Calu3 (cell line): ENCODE measurements at regions of chr20 and their contacts with region 1.

Region 1: GRCh38 chr20:58236612-58237330 is 8.3 kb upstream of the ANKRD60 start:
- DNase-seq: peak; percentile 90
- H3K4me3 Mint-ChIP-seq: peak overlapping the region; percentile 73
- H3K27ac Mint-ChIP-seq: no peak overlapping the region
- H3K4me1 Mint-ChIP-seq: no peaks in the 10 kb centered on the region
- H3K27me3 Mint-ChIP-seq: no peaks in the 10 kb centered on the region
- CTCF ChIP-seq: peak; percentile 96

Region 2: DNA sequence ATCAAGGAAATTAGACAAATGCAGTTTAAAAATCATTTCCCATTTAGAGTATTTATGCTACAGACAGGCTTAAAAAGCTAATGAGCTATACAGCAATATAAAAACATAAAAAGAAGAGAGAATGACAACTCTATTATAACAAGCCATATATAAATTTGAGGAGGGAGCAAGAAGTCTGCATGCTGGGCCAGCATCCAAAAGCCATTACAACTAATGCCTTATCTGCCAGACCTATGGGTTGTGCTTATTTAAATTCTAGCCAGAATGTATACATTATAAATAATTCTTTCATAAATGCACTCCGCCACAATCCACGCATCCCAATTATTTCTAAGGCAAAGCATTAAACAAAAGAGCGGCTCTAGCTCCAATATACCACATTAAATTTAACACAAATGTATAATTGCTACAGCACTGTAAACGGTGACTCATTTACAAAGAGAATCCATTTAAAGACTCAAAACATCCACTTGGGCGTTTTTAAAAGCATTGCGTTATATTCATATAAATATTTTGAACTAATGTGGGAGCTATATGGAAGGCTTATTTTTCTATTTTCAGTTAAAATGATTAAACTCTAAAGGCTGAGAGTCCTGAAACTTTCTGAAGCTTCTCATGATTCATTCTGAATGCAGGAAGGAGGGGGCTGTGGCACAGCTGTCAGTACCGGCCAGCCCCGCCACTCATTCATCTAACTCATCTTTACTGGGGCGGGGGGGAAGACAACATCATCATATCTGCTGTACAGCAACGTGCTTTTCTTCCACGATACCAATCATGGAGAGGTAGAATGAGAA is 35.0 kb after region 1 on chr20:
- CTCF ChIA-PET with region 1: no interaction called
- intact Hi-C with region 1: no loop called
- DNase-seq: no peak
- H3K4me3 Mint-ChIP-seq: no peak overlapping the region
- H3K27ac Mint-ChIP-seq: no peak overlapping the region
- H3K4me1 Mint-ChIP-seq: no peaks in the 10 kb centered on the region
- H3K27me3 Mint-ChIP-seq: no peaks in the 10 kb centered on the region
- CTCF ChIP-seq: no peak

Region 3: DNA sequence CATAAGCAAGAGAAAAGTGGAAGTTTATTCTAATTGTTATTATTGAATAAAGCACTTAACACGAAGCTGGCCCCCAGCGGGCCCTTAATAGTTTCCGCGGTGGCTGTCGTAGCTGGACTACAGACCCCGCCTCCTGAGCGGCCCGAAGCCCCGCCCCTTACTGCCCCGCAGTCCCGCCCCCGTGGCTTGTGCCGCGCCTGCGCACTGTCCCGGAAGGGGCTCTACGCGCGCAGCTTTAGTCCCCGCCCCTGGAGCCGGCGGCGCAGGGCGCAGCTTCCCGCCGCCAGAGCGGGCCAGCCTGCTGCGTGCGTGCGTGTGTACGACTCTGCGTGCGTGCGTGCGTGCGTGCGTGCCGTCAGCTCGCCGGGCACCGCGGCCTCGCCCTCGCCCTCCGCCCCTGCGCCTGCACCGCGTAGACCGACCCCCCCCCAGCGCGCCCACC is 152.1 kb after region 1 on chr20 and contains the start of gene VAPB:
- CTCF ChIA-PET with region 1: no interaction called
- intact Hi-C with region 1: loop called (anchors 10 kb)
- DNase-seq: peak; percentile 99
- H3K4me3 Mint-ChIP-seq: peak within 1 kb of the TSS; percentile 80
- H3K27ac Mint-ChIP-seq: peak within 1 kb of the TSS; percentile 83
- H3K4me1 Mint-ChIP-seq: peaks cover 51% of the 10 kb centered on the region
- H3K27me3 Mint-ChIP-seq: peaks cover 5% of the 10 kb centered on the region
- CTCF ChIP-seq: no peak
- total RNA-seq, gene VAPB: 82.4 and 92.7 TPM in 2 replicates

Region 4: DNA sequence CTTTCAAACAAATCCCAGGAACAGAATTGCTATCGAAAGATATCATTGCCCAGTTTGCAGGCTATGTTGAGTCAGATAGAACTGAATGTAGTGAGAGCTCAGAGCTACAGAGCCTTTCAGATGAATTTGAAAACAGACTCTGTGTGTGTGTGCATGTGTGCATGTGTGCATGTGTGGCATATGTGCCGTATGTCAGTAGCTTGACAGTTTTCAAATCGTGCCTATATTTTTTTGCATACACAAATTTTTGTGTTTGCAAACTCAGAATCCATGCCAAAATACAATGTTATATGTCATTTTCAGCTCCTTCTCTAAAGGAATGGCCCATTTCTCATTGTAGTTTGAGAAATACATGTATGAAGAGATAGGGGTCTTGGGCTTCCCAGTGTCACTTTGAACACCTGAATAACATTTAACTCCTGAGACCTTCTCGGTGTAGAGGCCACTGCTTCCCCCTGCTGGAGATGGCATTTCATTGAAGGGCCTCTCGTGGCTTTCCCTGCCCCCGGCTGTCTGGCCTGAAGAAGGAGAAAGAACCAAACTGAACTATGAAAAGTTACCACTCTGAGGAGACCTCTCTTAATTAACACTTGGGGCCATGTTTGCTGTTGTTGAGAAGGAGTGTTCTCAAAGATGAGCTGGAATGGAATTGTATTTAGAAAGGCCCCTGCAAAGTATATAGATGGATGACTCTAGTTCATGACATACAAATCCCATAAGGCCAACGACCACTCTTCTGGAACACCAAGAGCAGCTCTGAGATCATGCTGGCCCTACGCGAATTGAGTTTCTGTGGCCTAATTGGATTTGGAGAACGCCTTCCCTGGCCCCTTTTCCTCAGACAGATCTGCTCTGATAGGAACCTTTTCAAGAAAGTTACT is 211.0 kb after region 1 on chr20:
- CTCF ChIA-PET with region 1: no interaction called
- intact Hi-C with region 1: loop called (anchors 1 kb)
- DNase-seq: peak; percentile 80
- H3K4me3 Mint-ChIP-seq: no peak overlapping the region
- H3K27ac Mint-ChIP-seq: no peak overlapping the region
- H3K4me1 Mint-ChIP-seq: no peaks in the 10 kb centered on the region
- H3K27me3 Mint-ChIP-seq: no peaks in the 10 kb centered on the region
- CTCF ChIP-seq: peak; percentile 84

Region 5: DNA sequence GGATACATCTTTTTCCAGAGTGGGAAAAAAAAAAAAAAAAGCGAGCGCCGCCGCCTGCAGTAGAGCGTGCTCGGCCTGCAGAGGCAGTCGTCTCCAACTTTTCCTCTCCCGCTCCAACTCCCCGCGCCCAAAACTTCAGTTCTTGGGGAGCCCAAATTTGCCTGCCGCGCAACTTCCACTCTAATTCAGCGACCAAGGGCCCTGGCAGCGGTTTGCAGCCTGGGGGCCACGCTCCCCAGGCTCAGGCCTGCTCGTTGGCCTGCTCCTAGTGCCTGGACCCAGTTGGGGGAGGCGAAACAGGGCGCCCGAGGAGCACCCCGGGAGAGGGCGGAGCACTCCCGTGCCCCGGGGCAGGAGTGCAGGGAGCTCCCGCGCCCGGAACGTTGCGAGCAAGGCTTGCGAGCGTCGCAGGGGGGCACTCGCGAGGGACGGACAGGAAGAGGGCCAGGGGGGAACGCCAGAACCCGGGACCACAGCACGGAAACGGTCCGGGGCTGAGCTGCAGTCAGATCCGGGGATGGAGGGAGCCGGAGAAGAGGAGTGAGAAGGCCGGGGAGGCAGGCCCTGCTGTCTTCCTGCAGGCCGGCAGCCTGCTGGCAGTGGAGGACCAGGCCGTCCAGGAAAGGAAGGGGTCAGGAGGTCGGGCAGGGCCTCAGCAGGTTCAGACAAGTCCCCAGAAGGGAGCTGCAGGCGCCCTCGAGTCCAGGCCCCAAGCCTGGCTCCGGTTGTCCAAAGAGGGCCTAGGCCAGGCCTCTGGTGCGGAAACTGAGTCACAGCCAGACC is 414.2 kb after region 1 on chr20 and contains the start of gene STX16:
- CTCF ChIA-PET with region 1: interaction called, 3 read pairs
- intact Hi-C with region 1: loop called (anchors 5 kb)
- DNase-seq: peak; percentile 96
- H3K4me3 Mint-ChIP-seq: peak within 1 kb of the TSS; percentile 97
- H3K27ac Mint-ChIP-seq: peak within 1 kb of the TSS; percentile 83
- H3K4me1 Mint-ChIP-seq: peaks cover 19% of the 10 kb centered on the region
- H3K27me3 Mint-ChIP-seq: no peaks in the 10 kb centered on the region
- CTCF ChIP-seq: peak; percentile 96
- total RNA-seq, gene STX16: 86.0 and 99.7 TPM in 2 replicates

Region 6: GRCh38 chr20:58839474-58839874 is 602.7 kb after region 1 on chr20:
- CTCF ChIA-PET with region 1: no interaction called
- intact Hi-C with region 1: loop called (anchors 10 kb)
- DNase-seq: peak; percentile 44
- H3K4me3 Mint-ChIP-seq: peak overlapping the region; percentile 20
- H3K27ac Mint-ChIP-seq: no peak overlapping the region
- H3K4me1 Mint-ChIP-seq: no peaks in the 10 kb centered on the region
- H3K27me3 Mint-ChIP-seq: peaks cover 71% of the 10 kb centered on the region
- CTCF ChIP-seq: peak; percentile 24